ENCODE measurements at regions of chr12 and their contacts with region 1.

Region 1: DNA sequence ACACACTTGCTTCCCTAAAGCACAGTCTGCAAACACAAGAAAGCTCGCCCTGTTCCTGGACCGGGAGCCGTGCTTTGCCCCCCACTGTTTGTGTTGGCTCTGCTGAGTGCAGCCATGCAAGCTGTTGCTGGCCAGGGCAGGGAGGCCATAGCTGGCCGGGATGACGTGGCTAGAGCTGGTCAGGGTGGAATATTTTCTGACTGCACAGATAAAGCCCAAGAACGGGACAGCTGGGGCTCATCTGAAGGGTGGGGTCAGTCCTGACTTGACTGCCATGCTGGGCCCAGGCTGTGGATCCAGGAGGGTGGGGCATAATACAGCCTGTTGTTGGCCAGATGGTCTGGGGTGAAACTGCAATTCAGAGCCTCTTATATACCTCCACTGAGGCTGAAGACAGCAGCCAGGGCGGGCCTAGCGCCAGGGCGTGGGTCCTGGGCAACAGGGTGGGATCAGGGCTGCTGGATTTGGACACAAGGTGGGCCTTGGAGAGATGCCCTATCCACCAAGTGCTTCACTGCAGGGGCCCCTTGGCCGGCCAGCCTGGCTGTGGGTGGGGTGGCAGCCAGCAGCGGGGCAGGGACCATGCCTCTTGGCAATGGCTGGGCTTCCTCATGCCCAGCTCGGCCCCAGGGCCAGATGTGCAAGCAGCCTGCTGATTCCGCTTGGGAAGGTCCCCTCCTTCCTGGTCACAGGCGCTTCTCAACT is 14.8 kb downstream of the KMT5A start:
- DNase-seq: no peak
- ATAC-seq: no peak
- H3K4me3 Mint-ChIP-seq: no peak overlapping the region
- H3K27ac Mint-ChIP-seq: no peak overlapping the region
- H3K4me1 Mint-ChIP-seq: peaks cover 3% of the 10 kb centered on the region
- H3K27me3 Mint-ChIP-seq: no peaks in the 10 kb centered on the region

Region 2: DNA sequence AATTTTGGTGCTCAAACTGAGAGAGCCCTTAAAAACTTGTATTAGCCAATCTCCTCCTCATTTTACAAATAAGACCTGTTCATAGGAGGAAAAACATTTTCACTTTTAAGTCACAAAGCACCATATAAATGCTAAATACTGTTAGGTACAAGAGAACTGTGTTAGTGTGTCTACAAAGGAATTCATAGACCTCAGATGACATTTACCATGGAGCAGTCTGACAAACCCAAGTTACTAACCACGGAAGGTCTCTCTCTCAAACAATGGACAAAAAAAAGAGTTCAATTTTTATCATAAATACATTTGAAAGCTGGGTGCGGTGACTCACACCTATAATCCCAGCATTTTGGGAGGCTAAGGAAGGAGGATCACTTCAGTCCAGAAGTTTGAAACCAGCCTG is 44.1 kb before region 1 on chr12:
- CTCF ChIA-PET with region 1: no interaction called
- POLR2A ChIA-PET with region 1: no interaction called
- intact Hi-C with region 1: loop called in 1 of 2 experiments (anchors 5 kb)
- DNase-seq: no peak
- ATAC-seq: no peak
- H3K4me3 Mint-ChIP-seq: no peak overlapping the region
- H3K27ac Mint-ChIP-seq: peak overlapping the region; percentile 34
- H3K4me1 Mint-ChIP-seq: peaks cover 61% of the 10 kb centered on the region
- H3K27me3 Mint-ChIP-seq: no peaks in the 10 kb centered on the region

Region 3: DNA sequence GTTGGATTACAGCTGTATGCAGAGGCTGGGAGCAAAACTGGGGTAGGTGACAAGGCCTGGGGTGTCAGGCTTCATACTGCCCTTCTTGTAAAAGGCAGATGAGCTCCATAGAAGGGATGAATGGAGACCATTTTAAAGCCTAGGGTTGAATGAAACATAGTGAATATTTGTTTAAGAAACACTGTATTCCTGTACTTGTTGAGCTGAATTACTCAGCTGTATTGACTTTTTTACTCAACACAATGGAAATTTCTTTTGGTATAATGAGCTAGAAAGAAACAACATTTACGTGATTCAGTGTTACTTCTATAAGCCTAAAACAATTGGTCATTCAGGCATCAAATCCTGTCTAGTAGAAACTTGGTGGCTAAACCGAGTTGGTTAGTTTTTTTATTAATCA is 327.5 kb after region 1 on chr12:
- CTCF ChIA-PET with region 1: no interaction called
- POLR2A ChIA-PET with region 1: no interaction called
- intact Hi-C with region 1: no loop called
- DNase-seq: no peak
- ATAC-seq: peak; percentile 66
- H3K4me3 Mint-ChIP-seq: no peak overlapping the region
- H3K27ac Mint-ChIP-seq: peak overlapping the region; percentile 76
- H3K4me1 Mint-ChIP-seq: peaks cover 35% of the 10 kb centered on the region
- H3K27me3 Mint-ChIP-seq: no peaks in the 10 kb centered on the region